MCF 10A (cell line): ENCODE measurements at regions of chr13 and their contacts with region 1.

Region 1: DNA sequence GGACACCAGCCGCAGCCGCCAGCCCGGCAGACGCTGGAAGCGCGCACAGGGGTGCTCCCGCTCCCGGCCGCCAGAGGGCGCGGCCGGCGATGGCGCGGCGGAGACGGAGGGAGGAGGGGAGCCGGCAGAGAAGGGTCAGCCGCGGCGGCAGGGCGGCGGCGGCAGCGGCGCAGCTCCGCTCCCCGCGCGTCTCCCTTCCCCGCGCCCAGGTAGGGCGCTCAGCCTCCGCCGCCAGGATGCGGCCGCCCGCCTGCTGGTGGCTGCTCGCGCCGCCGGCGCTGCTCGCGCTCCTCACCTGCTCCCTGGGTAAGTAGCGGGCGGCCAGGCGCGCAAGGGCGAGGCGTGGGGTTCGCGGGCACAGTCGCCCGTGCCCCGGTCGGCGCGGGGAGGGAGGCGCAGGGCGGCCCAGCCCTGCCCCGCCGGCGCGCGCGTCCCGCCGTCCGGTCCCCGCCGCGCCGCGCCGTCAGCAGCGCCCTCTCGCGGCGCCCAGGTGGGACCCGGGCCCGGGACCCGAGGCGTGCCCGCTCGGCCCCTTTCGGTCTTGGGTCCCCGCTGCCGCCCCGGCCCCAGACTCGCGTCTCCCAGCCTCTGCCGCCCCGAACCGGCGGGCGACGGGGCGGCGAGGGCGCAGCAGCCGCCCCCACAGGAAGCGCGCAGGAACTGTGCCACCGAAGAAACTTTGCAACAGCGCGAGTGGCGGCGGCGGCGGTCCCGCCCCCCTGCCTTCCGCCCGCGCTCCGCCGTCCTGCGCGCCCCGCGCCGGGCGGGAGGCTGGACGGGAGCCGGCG is at the start of gene B3GLCT:
- DNase-seq: peak; percentile 77
- H3K4me3 Mint-ChIP-seq: peak within 1 kb of the TSS; percentile 80
- H3K27ac Mint-ChIP-seq: peak within 1 kb of the TSS; percentile 66
- H3K4me1 Mint-ChIP-seq: peaks cover 30% of the 10 kb centered on the region
- H3K27me3 Mint-ChIP-seq: no peaks in the 10 kb centered on the region
- CTCF ChIP-seq: peak; percentile 89
- total RNA-seq, gene B3GLCT: 1.7 and 1.9 TPM in 2 replicates

Region 2: DNA sequence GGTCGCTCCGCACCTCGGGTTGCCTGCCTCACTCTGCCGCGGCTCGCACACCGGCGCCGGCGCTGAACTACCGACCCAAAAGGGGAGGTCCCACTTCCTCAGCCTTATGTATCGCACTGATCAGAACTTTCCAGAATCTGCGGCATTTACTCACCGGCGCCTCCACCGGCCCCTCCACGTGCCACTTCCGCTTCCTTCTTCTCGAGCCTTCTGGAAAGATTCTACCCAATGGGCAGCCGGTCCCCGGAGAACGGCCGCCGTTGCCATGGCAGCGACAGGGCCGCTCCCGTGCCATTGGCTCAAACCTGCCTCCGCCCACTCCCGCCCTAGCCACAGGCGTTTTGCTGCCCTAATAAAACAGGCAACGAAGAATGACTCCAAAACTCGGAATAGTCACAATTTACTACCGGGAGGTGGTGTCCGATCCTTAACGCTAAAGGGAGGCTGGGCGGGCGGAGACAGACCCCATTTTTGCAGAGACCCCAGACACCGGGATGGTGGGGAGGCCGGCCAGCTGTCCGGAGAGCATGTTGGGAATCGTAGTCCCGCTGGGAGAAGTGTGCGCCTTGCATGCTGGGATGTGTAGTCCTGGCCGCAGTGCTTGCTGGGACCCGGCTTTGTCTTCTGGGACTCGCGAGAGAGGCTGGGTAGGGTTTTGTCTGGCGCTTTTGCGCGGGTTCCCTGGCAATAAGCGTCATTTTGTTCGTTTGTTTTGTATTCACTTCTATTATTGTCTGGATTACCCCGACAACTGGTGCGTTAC is 38.0 kb before region 1 on chr13 and contains the start of gene HSPH1:
- CTCF ChIA-PET with region 1: interaction called, 7 read pairs
- POLR2A ChIA-PET with region 1: interaction called, 37 read pairs
- intact Hi-C with region 1: loop called (anchors 1 kb)
- DNase-seq: peak; percentile 98
- H3K4me3 Mint-ChIP-seq: peak within 1 kb of the TSS; percentile 97
- H3K27ac Mint-ChIP-seq: peak within 1 kb of the TSS; percentile 97
- H3K4me1 Mint-ChIP-seq: peaks cover 31% of the 10 kb centered on the region
- H3K27me3 Mint-ChIP-seq: no peaks in the 10 kb centered on the region
- CTCF ChIP-seq: no peak
- total RNA-seq, gene HSPH1: 67.8 and 71.8 TPM in 2 replicates

Region 3: GRCh38 chr13:31174018-31174417 is 26.0 kb before region 1 on chr13:
- CTCF ChIA-PET with region 1: interaction called, 10 read pairs
- POLR2A ChIA-PET with region 1: interaction called, 4 read pairs
- intact Hi-C with region 1: no loop called
- DNase-seq: peak; percentile 17
- H3K4me3 Mint-ChIP-seq: no peak overlapping the region
- H3K27ac Mint-ChIP-seq: no peak overlapping the region
- H3K4me1 Mint-ChIP-seq: peaks cover 16% of the 10 kb centered on the region
- H3K27me3 Mint-ChIP-seq: no peaks in the 10 kb centered on the region
- CTCF ChIP-seq: no peak

Region 4: GRCh38 chr13:31214435-31214834 is 14.4 kb after region 1 on chr13:
- CTCF ChIA-PET with region 1: interaction called, 7 read pairs
- POLR2A ChIA-PET with region 1: interaction called, 10 read pairs
- intact Hi-C with region 1: no loop called
- DNase-seq: no peak
- H3K4me3 Mint-ChIP-seq: no peak overlapping the region
- H3K27ac Mint-ChIP-seq: no peak overlapping the region
- H3K4me1 Mint-ChIP-seq: no peaks in the 10 kb centered on the region
- H3K27me3 Mint-ChIP-seq: no peaks in the 10 kb centered on the region
- CTCF ChIP-seq: no peak